ENCODE measurements at regions of chr16 and their contacts with region 1.

Region 1: GRCh38 chr16:58336332-58337089 is 41.7 kb upstream of the PRSS54 start:
- DNase-seq: peak; percentile 85
- H3K4me3 ChIP-seq: peak overlapping the region in 3 of 4 donors; percentile 17 to 20 (median 20)
- H3K27ac ChIP-seq: no peak overlapping the region
- H3K4me1 ChIP-seq: peaks cover 0 to 8% (median 0%) of the 10 kb centered on the region in 4 donors
- H3K27me3 ChIP-seq: peaks cover 0 to 3% (median 0%) of the 10 kb centered on the region in 3 donors
- CTCF ChIP-seq: peak; percentile 78 to 90 (median 82)
- EP300 ChIP-seq: no peak
- POLR2A ChIP-seq: no peak

Region 2: DNA sequence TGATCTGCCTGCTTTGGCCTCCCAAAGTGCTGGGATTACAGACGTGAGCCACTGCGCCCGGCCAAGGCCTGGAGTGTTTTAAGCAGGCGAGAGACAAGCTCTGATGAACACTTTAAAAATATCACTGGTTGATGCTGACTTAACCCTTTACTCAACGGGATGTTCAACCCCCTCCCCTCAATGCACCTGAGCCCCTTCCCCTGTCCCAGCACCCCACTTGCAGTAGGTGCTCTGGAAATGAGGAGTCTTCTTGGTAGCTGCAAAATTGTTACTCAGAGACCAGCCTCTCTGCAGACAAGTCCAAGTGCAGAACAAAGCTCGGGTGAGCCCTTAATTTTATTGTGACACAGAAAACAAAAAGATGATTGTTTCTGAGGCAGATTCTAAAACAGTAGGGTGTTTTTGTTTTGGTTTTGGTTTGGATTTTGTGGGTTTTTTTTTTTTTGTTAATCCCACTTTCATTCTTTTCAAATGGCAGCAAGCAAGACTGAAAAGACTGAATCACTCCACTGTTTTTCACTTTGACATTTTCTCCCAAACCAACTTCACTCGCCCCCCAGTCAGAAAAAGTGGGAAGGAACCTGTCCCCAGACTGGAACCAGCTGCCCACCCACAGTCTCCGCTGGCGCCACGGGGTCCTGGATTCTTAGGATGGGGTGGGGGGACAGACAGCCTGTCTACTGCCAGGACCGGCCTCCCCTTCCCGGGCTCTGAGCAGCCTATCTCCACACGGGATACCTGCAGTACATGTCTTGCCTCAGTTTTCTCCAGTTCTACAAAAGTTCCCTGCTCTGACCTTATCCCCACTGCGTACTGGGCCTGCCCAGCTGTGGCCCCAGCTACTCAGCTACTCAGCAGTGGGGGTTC is 1046.9 kb before region 1 on chr16:
- intact Hi-C with region 1: no loop called
- DNase-seq: peak; percentile 29
- H3K4me3 ChIP-seq: no peak overlapping the region
- H3K27ac ChIP-seq: no peak overlapping the region
- H3K4me1 ChIP-seq: peaks cover 0 to 5% (median 4%) of the 10 kb centered on the region in 4 donors
- H3K27me3 ChIP-seq: peaks cover 0 to 12% (median 8%) of the 10 kb centered on the region in 3 donors
- CTCF ChIP-seq: no peak
- EP300 ChIP-seq: no peak
- POLR2A ChIP-seq: no peak

Region 3: GRCh38 chr16:58487566-58488351 is 151.2 kb after region 1 on chr16:
- intact Hi-C with region 1: loop called (anchors 1 kb)
- DNase-seq: peak; percentile 88
- H3K4me3 ChIP-seq: peak overlapping the region in 3 of 4 donors; percentile 13 to 28 (median 26)
- H3K27ac ChIP-seq: no peak overlapping the region
- H3K4me1 ChIP-seq: peaks cover 0 to 9% (median 6%) of the 10 kb centered on the region in 4 donors
- H3K27me3 ChIP-seq: peaks cover 0 to 5% (median 0%) of the 10 kb centered on the region in 3 donors
- CTCF ChIP-seq: peak; percentile 78 to 90 (median 82)
- EP300 ChIP-seq: no peak
- POLR2A ChIP-seq: no peak

Region 4: DNA sequence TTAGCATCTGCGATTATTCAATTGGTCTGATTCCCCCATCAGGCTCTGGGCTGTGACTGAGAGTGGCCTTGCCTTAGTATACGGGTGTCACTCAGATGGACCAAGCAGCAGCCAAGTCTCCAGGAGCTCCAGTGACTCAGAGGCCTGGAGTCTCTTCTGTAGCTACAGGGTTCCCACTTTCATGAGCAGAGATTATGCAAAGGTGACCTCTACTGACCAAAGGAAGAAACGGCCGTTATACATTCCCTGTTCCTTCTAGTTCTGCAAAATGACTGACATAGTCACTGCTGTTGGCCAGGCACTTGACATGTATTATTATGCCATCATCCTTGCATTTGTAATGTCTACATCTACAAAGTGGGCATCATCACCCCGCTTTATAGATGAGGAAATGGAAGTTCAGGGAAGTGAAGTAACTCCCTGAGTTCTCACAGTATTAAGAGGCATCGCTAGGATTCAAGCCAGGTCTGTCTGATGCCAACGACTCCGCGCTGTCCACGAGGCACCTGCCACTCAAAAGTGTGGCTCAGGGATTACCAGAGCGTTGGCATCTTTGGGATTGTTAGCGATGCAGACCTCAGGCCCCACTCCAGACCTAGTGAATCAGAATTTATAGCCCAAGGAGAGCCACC is 324.8 kb after region 1 on chr16:
- intact Hi-C with region 1: loop called (anchors 5 kb)
- DNase-seq: no peak
- H3K4me3 ChIP-seq: no peak overlapping the region
- H3K27ac ChIP-seq: no peak overlapping the region
- H3K4me1 ChIP-seq: no peaks in the 10 kb centered on the region
- H3K27me3 ChIP-seq: no peaks in the 10 kb centered on the region
- CTCF ChIP-seq: peak in 3 of 4 experiments; percentile 16 to 49 (median 23)
- EP300 ChIP-seq: no peak
- POLR2A ChIP-seq: no peak

Region 5: DNA sequence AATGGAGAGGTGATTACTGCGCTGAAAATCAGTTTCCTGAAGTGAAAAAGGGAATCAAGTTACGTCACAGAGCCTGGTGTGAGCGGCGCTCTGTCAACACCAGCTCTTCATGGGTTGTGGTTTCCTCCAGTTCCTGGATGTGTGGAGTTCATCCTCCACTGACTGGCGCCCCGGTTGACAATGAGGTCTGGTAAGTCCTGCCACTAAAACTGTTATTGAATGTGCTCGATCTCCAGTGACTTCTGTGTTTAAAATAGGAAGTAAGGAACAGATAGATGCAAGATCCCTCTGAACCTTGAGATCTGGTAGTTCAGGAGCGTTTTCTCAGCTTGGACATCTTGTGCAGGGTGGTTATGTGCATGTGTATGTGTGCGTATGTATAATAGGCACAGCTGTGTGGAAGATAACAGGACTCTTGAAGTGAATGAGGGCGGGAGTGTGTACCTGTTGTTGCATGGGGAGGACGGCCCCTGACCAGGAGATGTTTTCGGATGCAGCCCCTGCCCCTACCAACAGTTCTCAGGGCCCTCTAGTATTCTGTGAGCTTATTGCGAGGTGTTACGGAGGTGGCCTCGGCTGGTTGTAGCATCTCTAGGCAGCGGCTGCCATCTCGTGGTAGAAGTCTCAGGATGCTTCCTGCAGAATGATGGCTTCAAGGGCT is 419.6 kb after region 1 on chr16:
- intact Hi-C with region 1: loop called (anchors 5 kb)
- DNase-seq: peak; percentile 71
- H3K4me3 ChIP-seq: no peak overlapping the region
- H3K27ac ChIP-seq: no peak overlapping the region
- H3K4me1 ChIP-seq: no peaks in the 10 kb centered on the region
- H3K27me3 ChIP-seq: no peaks in the 10 kb centered on the region
- CTCF ChIP-seq: peak in 3 of 4 experiments; percentile 26 to 54 (median 36)
- EP300 ChIP-seq: no peak
- POLR2A ChIP-seq: no peak

Measured in sigmoid colon (tissue), 7 donors.